GM12878 (cell line): ENCODE measurements at regions of chr1 and their contacts with region 1.

Region 1: DNA sequence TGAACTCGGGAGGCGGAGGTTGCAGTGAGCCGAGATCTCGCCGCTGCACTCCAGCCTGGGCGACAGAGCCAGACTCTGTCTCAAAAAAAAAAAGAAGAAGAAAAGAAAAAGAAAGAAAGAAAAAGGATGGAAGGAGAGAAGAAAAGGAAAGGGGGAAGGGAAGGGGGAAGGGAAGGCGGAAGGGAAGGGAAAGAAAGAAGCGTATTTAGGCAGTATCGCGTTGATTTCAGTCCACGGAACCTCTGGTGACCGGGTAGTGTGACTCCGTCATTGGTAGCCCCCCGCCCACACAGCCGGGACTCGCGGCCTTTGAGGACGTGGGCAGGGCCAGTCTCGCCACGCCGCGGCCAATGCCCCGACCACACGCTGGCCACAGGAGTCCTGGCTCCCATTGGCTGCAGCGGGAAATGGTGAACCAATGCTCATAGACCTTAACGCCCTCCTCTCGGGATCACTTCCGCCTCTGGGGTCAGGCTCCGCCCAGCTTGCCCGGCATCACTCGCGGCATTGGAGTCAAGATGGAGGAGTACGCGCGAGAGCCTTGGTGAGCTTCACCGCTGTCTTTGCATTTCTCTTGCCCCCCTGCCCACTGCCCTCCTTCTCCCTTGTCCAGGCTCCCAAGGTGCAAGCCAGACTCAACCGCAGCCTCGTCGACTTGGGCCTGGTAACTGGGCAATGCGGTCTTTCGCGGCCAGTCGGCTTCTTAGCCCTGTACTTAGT is at the start of gene TIMM17A:
- DNase-seq: peak; percentile 91
- ATAC-seq: peak; percentile 100
- H3K4me3 ChIP-seq: peak within 1 kb of the TSS; percentile 91
- H3K27ac ChIP-seq: peak within 1 kb of the TSS; percentile 91
- H3K4me1 ChIP-seq: no peaks in the 10 kb centered on the region; the same call in 1 of the 2 replicates
- H3K27me3 ChIP-seq: no peaks in the 10 kb centered on the region
- CTCF ChIP-seq: no peak
- EP300 ChIP-seq: peak in 1 of 2 experiments; percentile 47; a peak in 1 of 4 replicates
- POLR2A ChIP-seq: peak; percentile 99
- RAD21 ChIP-seq: no peak
- polyA plus RNA-seq, gene TIMM17A: 248 to 357 TPM

Region 2: DNA sequence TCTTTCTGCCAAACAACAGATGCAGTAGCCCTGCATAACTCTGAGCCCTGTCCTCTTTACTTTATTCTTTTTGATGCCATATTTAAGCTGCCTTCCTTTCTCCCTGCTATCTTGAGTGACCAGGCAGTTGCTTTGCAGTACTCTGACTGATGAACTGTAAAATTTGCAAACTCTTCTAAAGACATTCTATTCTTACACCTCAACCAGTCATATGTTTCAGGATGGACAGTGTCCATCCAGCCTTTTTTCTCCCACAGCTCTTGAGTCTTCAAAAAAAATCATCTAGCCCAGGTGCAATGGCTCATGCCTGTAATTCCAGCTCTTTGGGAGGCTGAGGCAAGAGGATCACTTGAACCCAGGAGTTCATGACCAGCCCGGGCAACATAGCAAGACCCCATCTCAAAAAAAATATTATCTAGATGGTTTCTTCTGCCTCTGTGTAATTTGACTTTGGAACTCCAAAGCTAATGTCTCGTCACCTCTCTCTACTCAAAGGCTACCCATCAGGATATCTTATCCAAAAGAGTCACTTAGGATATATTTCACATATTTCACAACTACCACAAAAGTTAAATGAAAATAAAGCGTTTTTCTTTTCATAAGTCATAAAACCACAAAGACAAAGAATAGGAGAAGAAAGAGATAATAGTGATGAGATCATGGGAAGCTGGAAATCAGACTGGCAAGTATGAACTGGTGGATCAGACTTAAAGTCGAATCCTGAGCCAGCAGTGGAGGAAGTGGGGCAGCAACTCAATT is 180.8 kb before region 1 on chr1:
- CTCF ChIA-PET with region 1: no interaction called
- POLR2A ChIA-PET with region 1: no interaction called
- RAD21 ChIA-PET with region 1: no interaction called
- SMC1A ChIA-PET with region 1: no interaction called
- in situ Hi-C with region 1: no loop called
- intact Hi-C with region 1: no loop called
- DNase-seq: no peak
- ATAC-seq: no peak
- H3K4me3 ChIP-seq: no peak overlapping the region
- H3K27ac ChIP-seq: no peak overlapping the region
- H3K4me1 ChIP-seq: no peaks in the 10 kb centered on the region
- H3K27me3 ChIP-seq: peaks cover 0 to 7% of the 10 kb centered on the region in 2 experiments; a peak in 2 of 4 replicates
- CTCF ChIP-seq: no peak
- EP300 ChIP-seq: no peak
- POLR2A ChIP-seq: no peak
- RAD21 ChIP-seq: no peak

Region 3: GRCh38 chr1:201807958-201808632 is 147.1 kb before region 1 on chr1:
- CTCF ChIA-PET with region 1: no interaction called
- POLR2A ChIA-PET with region 1: no interaction called
- RAD21 ChIA-PET with region 1: no interaction called
- SMC1A ChIA-PET with region 1: no interaction called
- in situ Hi-C with region 1: no loop called
- intact Hi-C with region 1: no loop called
- DNase-seq: no peak
- ATAC-seq: no peak
- H3K4me3 ChIP-seq: no peak overlapping the region
- H3K27ac ChIP-seq: no peak overlapping the region
- H3K4me1 ChIP-seq: no peaks in the 10 kb centered on the region
- H3K27me3 ChIP-seq: no peaks in the 10 kb centered on the region
- CTCF ChIP-seq: no peak
- EP300 ChIP-seq: no peak
- POLR2A ChIP-seq: no peak
- RAD21 ChIP-seq: no peak

Region 4: GRCh38 chr1:201945157-201945556 is 10.0 kb before region 1 on chr1:
- CTCF ChIA-PET with region 1: no interaction called
- POLR2A ChIA-PET with region 1: no interaction called
- RAD21 ChIA-PET with region 1: no interaction called
- SMC1A ChIA-PET with region 1: no interaction called
- in situ Hi-C with region 1: no loop called
- intact Hi-C with region 1: no loop called
- DNase-seq: no peak
- ATAC-seq: no peak; the same call in 2 of the 3 replicates
- H3K4me3 ChIP-seq: no peak overlapping the region
- H3K27ac ChIP-seq: no peak overlapping the region
- H3K4me1 ChIP-seq: no peaks in the 10 kb centered on the region
- H3K27me3 ChIP-seq: peaks cover 13 to 17% of the 10 kb centered on the region in 2 experiments
- CTCF ChIP-seq: 0 out of 6 replicates have a peak, but pooled peaks of 1 of the 3 experiments have one; percentile 2
- EP300 ChIP-seq: no peak
- POLR2A ChIP-seq: no peak
- RAD21 ChIP-seq: no peak

Region 5: GRCh38 chr1:201982623-201983379 is 27.6 kb after region 1 on chr1 and contains the start of gene RNPEP:
- CTCF ChIA-PET with region 1: interaction called, 3 read pairs
- POLR2A ChIA-PET with region 1: interaction called, 6 read pairs
- RAD21 ChIA-PET with region 1: no interaction called
- SMC1A ChIA-PET with region 1: interaction called, 3 read pairs
- in situ Hi-C with region 1: no loop called
- intact Hi-C with region 1: loop called (anchors 2 kb)
- DNase-seq: no peak
- ATAC-seq: peak; percentile 88
- H3K4me3 ChIP-seq: peak within 1 kb of the TSS; percentile 82
- H3K27ac ChIP-seq: peak within 1 kb of the TSS; percentile 78
- H3K4me1 ChIP-seq: peaks cover 3% of the 10 kb centered on the region
- H3K27me3 ChIP-seq: 0 out of 4 replicates have a peak, but pooled peaks cover 0 to 2% of the 10 kb centered on the region in 2 experiments
- CTCF ChIP-seq: peak in 2 of 3 experiments; percentile 5 to 13; a peak in 2 of 6 replicates
- EP300 ChIP-seq: no peak
- POLR2A ChIP-seq: peak; percentile 80
- RAD21 ChIP-seq: no peak
- polyA plus RNA-seq, gene RNPEP: 18.3 to 21.6 TPM

Region 6: DNA sequence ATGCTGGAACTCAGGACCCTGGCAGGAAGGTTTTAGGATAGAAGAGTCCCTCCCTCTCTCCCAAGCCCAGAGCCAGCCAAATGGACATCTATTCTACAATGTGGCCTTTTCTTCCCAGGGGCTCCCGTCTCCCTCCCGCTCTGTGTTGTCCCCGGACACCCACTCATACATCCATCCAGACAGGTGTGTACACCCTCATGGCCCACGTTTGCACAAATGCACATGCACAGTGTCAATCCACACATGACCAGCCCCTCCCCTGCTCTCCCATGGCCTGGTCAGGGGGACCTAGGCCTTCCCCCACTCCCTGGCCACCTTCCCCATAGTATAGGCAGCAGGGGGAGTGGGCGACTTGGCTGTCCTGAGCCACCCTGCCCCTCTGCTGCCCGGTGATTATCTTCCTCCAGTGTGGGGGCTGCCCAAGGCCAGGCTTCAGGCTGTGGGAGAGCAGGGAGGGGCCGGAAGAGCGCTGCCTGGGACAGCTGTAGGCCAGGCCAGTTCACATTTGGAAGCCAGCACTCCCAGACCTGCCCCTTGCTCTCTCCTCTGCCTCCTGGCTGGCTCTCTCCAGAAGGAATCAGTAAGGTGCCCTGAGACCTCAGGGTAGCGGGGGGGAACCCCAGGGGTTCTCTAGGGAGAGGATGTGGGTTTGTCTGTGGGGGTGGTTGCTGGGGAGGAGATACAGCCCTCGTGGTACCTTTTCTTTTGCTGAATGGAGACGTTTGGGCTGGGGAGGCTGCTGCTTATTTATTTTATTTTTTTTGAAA is 209.3 kb after region 1 on chr1:
- CTCF ChIA-PET with region 1: no interaction called
- POLR2A ChIA-PET with region 1: no interaction called
- RAD21 ChIA-PET with region 1: no interaction called
- SMC1A ChIA-PET with region 1: no interaction called
- in situ Hi-C with region 1: no loop called
- intact Hi-C with region 1: no loop called
- DNase-seq: peak; percentile 56
- ATAC-seq: peak; percentile 61
- H3K4me3 ChIP-seq: peak overlapping the region; percentile 26
- H3K27ac ChIP-seq: peak overlapping the region; percentile 29
- H3K4me1 ChIP-seq: peaks cover 57% of the 10 kb centered on the region
- H3K27me3 ChIP-seq: no peaks in the 10 kb centered on the region
- CTCF ChIP-seq: no peak
- EP300 ChIP-seq: peak; percentile 54 to 74; a peak in 2 of 4 replicates
- POLR2A ChIP-seq: peak; percentile 27; the same call in 1 of the 2 replicates
- RAD21 ChIP-seq: no peak